ENCODE measurements at regions of chr6 and their contacts with region 1.

Region 1: DNA sequence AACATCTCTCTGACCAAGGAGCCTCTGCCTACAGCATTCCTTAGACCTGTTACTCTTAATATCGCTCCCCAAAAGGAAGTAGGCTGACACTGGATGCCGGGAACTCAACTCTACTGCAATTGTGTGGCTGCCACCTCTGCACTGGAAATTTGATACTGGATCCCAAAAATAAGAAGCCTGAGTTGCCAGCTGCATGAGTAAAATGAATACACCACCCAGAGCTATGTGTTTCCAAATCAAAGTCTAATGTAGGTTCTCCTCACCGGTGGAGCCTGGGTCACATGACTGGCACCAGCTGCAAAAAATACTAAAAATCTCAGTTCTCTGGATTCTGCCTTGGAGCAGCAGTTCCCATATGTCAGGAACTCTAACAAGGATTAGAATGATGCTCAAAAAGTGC is 36.8 kb downstream of the UNC5CL start:
- DNase-seq: no peak
- H3K4me3 Mint-ChIP-seq: no peak overlapping the region
- H3K27ac Mint-ChIP-seq: no peak overlapping the region
- H3K4me1 Mint-ChIP-seq: no peaks in the 10 kb centered on the region
- H3K27me3 Mint-ChIP-seq: peaks cover 14% of the 10 kb centered on the region

Region 2: DNA sequence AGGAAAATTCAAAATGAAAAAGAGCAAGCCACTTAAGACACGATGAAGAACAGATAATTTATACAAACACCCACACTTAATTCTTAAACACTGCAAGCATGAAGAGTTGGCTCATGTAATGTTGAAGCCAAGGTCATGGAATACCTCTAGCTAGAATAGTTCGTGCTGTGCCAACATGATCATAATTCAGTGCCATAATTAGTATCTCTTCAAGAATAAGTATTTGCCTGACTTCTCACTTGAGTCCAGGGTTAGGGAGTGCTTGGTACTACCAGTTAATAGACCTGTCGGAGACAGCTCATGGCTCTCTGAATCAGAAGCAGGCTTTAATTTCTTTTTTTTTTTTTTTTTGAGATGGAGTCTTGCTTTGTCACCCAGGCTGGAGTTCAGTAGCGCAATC is 169.5 kb before region 1 on chr6:
- CTCF ChIA-PET with region 1: no interaction called
- intact Hi-C with region 1: no loop called
- DNase-seq: no peak
- H3K4me3 Mint-ChIP-seq: no peak overlapping the region
- H3K27ac Mint-ChIP-seq: no peak overlapping the region
- H3K4me1 Mint-ChIP-seq: no peaks in the 10 kb centered on the region
- H3K27me3 Mint-ChIP-seq: peaks cover 11% of the 10 kb centered on the region

Region 3: GRCh38 chr6:41039060-41039998 is 37.1 kb after region 1 on chr6 and contains the start of gene UNC5CL:
- CTCF ChIA-PET with region 1: no interaction called
- intact Hi-C with region 1: loop called (anchors 1 kb)
- DNase-seq: peak; percentile 76
- H3K4me3 Mint-ChIP-seq: no peak within 1 kb of the TSS
- H3K27ac Mint-ChIP-seq: no peak within 1 kb of the TSS
- H3K4me1 Mint-ChIP-seq: peaks cover 3% of the 10 kb centered on the region
- H3K27me3 Mint-ChIP-seq: no peaks in the 10 kb centered on the region
- total RNA-seq, gene UNC5CL: 2.3 to 3.0 TPM

Region 4: DNA sequence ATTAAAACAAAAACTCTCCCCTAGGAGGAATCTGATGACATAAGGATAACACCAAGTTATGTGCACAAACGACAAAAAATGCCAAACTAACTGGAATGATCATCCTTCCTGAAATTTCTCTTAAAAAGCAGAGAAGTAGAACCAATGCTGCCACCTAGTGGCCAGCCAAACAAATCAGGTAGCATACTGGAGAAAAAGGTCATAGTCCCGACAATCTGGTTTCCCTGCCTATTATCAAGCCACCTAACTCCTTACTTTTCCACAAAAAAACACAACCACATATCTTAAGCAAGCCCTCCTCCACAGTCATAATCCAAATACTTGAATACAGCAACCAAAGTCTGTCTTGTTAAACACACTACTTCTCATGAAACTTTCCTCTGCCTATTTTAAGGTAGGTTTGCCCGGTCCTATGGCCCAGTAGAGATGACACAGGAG is 64.7 kb after region 1 on chr6:
- CTCF ChIA-PET with region 1: interaction called, 4 read pairs
- intact Hi-C with region 1: loop called (anchors 1 kb)
- DNase-seq: peak; percentile 78
- H3K4me3 Mint-ChIP-seq: no peak overlapping the region
- H3K27ac Mint-ChIP-seq: no peak overlapping the region
- H3K4me1 Mint-ChIP-seq: peaks cover 35% of the 10 kb centered on the region
- H3K27me3 Mint-ChIP-seq: no peaks in the 10 kb centered on the region

Region 5: GRCh38 chr6:41182069-41183034 is 180.1 kb after region 1 on chr6:
- CTCF ChIA-PET with region 1: interaction called, 3 read pairs
- intact Hi-C with region 1: loop called (anchors 1 kb)
- DNase-seq: peak; percentile 74
- H3K4me3 Mint-ChIP-seq: no peak overlapping the region
- H3K27ac Mint-ChIP-seq: no peak overlapping the region
- H3K4me1 Mint-ChIP-seq: peaks cover 24% of the 10 kb centered on the region
- H3K27me3 Mint-ChIP-seq: no peaks in the 10 kb centered on the region